Activated CD8-positive, alpha-beta T cell treated with anti-CD3 and anti-CD28 coated beads for 36 hours (primary cell): ENCODE measurements at regions of chr9 and their contacts with region 1.

Region 1: GRCh38 chr9:21110708-21111576 is 30.7 kb downstream of the IFNW1 start:
- DNase-seq: peak; percentile 18
- ATAC-seq: peak; percentile 87
- H3K4me3 Mint-ChIP-seq: no peak overlapping the region
- H3K27ac Mint-ChIP-seq: no peak overlapping the region
- H3K4me1 Mint-ChIP-seq: no peaks in the 10 kb centered on the region
- H3K27me3 Mint-ChIP-seq: no peaks in the 10 kb centered on the region
- CTCF ChIP-seq: peak; percentile 91

Region 2: DNA sequence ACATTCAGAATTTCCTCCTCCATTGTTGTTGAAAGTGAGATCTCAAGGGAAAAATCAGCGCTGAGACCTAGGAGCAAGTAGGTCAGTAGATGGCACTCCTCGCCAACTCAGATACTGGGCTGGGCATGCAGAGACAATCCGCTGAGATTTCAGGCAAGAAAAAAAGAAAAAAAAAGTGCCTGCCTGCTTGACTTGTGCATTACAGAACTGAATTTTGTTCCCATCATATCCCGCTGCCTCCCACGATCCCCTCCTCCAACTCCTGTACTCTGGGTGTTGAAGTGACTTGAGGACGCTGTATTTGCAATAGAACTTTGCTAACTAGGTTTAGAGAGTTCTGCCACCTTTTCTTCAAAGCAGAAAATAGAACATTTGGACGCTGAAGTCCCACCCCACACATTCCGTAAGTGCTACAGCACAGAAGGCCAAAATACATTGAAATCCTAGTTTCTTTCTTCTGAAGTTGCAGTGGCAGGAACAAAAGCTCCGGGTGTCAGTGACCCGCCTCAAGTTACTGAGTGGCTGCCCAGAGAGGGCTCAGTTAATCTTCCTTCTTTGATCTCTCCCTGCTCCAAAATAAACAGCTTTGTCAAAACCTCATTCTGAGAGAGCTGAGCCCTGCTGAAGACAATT is 754.4 kb before region 1 on chr9:
- CTCF ChIA-PET with region 1: no interaction called
- POLR2A ChIA-PET with region 1: no interaction called
- intact Hi-C with region 1: loop called (anchors 10 kb)
- DNase-seq: peak; percentile 72
- ATAC-seq: peak; percentile 50
- H3K4me3 Mint-ChIP-seq: no peak overlapping the region
- H3K27ac Mint-ChIP-seq: no peak overlapping the region
- H3K4me1 Mint-ChIP-seq: peaks cover 68% of the 10 kb centered on the region
- H3K27me3 Mint-ChIP-seq: no peaks in the 10 kb centered on the region
- CTCF ChIP-seq: peak; percentile 53

Region 3: GRCh38 chr9:20941174-20941690 is 169.7 kb before region 1 on chr9:
- CTCF ChIA-PET with region 1: interaction called, 26 read pairs
- POLR2A ChIA-PET with region 1: no interaction called
- intact Hi-C with region 1: no loop called
- DNase-seq: peak; percentile 66
- ATAC-seq: peak; percentile 96
- H3K4me3 Mint-ChIP-seq: no peak overlapping the region
- H3K27ac Mint-ChIP-seq: no peak overlapping the region
- H3K4me1 Mint-ChIP-seq: peaks cover 4% of the 10 kb centered on the region
- H3K27me3 Mint-ChIP-seq: no peaks in the 10 kb centered on the region
- CTCF ChIP-seq: peak; percentile 87

Region 4: GRCh38 chr9:21031091-21031807 is 79.7 kb before region 1 on chr9 and contains the start of gene HACD4:
- CTCF ChIA-PET with region 1: interaction called, 21 read pairs
- POLR2A ChIA-PET with region 1: interaction called, 3 read pairs
- intact Hi-C with region 1: no loop called
- DNase-seq: peak; percentile 74
- ATAC-seq: peak; percentile 80
- H3K4me3 Mint-ChIP-seq: peak within 1 kb of the TSS; percentile 70
- H3K27ac Mint-ChIP-seq: peak within 1 kb of the TSS; percentile 87
- H3K4me1 Mint-ChIP-seq: peaks cover 26% of the 10 kb centered on the region
- H3K27me3 Mint-ChIP-seq: no peaks in the 10 kb centered on the region
- CTCF ChIP-seq: no peak
- total RNA-seq, gene HACD4: 4.0 to 4.1 TPM

Region 5: GRCh38 chr9:21078717-21079116 is 32.2 kb before region 1 on chr9:
- CTCF ChIA-PET with region 1: interaction called, 37 read pairs
- POLR2A ChIA-PET with region 1: no interaction called
- intact Hi-C with region 1: no loop called
- DNase-seq: no peak
- ATAC-seq: no peak
- H3K4me3 Mint-ChIP-seq: no peak overlapping the region
- H3K27ac Mint-ChIP-seq: no peak overlapping the region
- H3K4me1 Mint-ChIP-seq: peaks cover 30% of the 10 kb centered on the region
- H3K27me3 Mint-ChIP-seq: peaks cover 2% of the 10 kb centered on the region
- CTCF ChIP-seq: peak; percentile 28

Region 6: DNA sequence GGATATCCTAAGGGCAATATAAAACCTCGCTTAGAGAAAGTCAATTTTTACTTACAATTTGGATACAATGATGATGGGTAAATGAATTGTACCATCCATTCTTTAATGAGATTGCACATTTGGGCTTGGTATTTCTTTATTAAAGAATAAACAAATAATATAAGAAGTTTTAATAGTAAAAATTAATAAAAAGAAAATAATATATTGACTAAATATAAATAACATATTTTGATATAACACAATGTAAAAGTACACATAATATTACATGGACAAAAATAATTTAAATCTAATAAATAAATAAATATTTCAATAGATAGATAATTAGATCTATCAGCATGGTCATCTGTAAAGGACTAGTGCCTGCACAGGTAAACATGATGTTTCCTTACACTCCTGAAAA is 54.6 kb after region 1 on chr9:
- CTCF ChIA-PET with region 1: no interaction called
- POLR2A ChIA-PET with region 1: no interaction called
- intact Hi-C with region 1: no loop called
- DNase-seq: no peak
- ATAC-seq: no peak
- H3K4me3 Mint-ChIP-seq: no peak overlapping the region
- H3K27ac Mint-ChIP-seq: no peak overlapping the region
- H3K4me1 Mint-ChIP-seq: peaks cover 18% of the 10 kb centered on the region
- H3K27me3 Mint-ChIP-seq: no peaks in the 10 kb centered on the region
- CTCF ChIP-seq: no peak